Activated CD4-positive, alpha-beta memory T cell treated with anti-CD3 and anti-CD28 coated beads for 36 hours (primary cell): ENCODE measurements at regions of chr6 and their contacts with region 1.

Region 1: GRCh38 chr6:16761471-16762267 is 409 bp upstream of the ATXN1 start:
- DNase-seq: peak; percentile 92
- H3K4me3 Mint-ChIP-seq: peak overlapping the region; percentile 94
- H3K27ac Mint-ChIP-seq: peak overlapping the region; percentile 93
- H3K4me1 Mint-ChIP-seq: peaks cover 58% of the 10 kb centered on the region
- H3K27me3 Mint-ChIP-seq: no peaks in the 10 kb centered on the region

Region 2: DNA sequence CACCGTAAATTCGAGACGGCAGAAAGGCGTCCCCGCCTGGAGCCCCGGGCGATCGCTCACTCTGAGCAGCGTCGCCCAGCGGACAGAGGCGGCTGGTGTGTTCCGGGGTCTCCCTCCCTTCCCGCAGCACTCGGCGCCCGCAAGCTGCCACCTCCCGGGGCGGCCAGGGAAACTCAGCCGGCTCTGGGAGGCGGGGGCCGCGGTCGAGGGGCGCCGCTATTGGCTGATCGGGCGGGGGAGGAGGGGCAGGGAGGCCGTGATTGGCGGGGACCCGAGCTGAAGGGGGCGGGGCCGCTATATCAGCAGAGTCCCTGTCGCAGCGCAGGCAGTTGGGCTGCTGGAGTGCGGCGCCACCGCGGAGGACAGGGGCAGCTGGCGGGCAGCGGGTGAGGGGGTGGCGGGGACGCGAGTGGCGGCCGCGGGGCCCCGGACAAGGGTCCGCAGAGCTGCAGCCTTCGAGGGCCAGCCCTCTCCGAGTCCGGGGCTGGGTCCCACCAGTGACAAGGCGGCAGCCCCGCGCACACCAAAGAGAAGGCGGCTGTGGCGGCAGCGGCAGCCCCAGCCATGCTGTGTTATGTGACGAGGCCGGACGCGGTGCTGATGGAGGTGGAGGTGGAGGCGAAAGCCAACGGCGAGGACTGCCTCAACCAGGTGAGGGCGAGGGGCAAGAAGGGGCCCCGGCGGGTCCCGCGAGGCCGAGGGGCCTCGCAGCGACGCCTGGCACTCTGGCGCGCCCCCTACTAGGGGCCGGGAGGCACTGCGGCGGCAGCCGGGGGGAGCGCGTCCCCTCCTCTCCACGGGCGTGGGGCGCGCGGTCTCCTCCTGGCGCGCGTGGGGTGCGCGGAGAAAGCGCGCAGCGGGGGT is 632.7 kb before region 1 on chr6 and contains the start of gene MYLIP:
- CTCF ChIA-PET with region 1: no interaction called
- POLR2A ChIA-PET with region 1: no interaction called
- intact Hi-C with region 1: loop called (anchors 5 kb)
- DNase-seq: peak; percentile 98
- H3K4me3 Mint-ChIP-seq: peak within 1 kb of the TSS; percentile 93
- H3K27ac Mint-ChIP-seq: peak within 1 kb of the TSS; percentile 94
- H3K4me1 Mint-ChIP-seq: peaks cover 28% of the 10 kb centered on the region
- H3K27me3 Mint-ChIP-seq: no peaks in the 10 kb centered on the region
- total RNA-seq, gene MYLIP: 11.4 TPM

Region 3: GRCh38 chr6:16438718-16439591 is 322.7 kb before region 1 on chr6:
- CTCF ChIA-PET with region 1: interaction called, 14 read pairs
- POLR2A ChIA-PET with region 1: interaction called, 26 read pairs
- intact Hi-C with region 1: loop called (anchors 1 kb)
- DNase-seq: peak; percentile 62
- H3K4me3 Mint-ChIP-seq: peak overlapping the region; percentile 98
- H3K27ac Mint-ChIP-seq: peak overlapping the region; percentile 100
- H3K4me1 Mint-ChIP-seq: peaks cover 69% of the 10 kb centered on the region
- H3K27me3 Mint-ChIP-seq: no peaks in the 10 kb centered on the region

Region 4: GRCh38 chr6:16591396-16592222 is 170.1 kb before region 1 on chr6:
- CTCF ChIA-PET with region 1: interaction called, 3 read pairs
- POLR2A ChIA-PET with region 1: interaction called, 6 read pairs
- intact Hi-C with region 1: loop called (anchors 1 kb)
- DNase-seq: peak; percentile 72
- H3K4me3 Mint-ChIP-seq: peak overlapping the region; percentile 39
- H3K27ac Mint-ChIP-seq: peak overlapping the region; percentile 78
- H3K4me1 Mint-ChIP-seq: peaks cover 43% of the 10 kb centered on the region
- H3K27me3 Mint-ChIP-seq: no peaks in the 10 kb centered on the region

Region 5: DNA sequence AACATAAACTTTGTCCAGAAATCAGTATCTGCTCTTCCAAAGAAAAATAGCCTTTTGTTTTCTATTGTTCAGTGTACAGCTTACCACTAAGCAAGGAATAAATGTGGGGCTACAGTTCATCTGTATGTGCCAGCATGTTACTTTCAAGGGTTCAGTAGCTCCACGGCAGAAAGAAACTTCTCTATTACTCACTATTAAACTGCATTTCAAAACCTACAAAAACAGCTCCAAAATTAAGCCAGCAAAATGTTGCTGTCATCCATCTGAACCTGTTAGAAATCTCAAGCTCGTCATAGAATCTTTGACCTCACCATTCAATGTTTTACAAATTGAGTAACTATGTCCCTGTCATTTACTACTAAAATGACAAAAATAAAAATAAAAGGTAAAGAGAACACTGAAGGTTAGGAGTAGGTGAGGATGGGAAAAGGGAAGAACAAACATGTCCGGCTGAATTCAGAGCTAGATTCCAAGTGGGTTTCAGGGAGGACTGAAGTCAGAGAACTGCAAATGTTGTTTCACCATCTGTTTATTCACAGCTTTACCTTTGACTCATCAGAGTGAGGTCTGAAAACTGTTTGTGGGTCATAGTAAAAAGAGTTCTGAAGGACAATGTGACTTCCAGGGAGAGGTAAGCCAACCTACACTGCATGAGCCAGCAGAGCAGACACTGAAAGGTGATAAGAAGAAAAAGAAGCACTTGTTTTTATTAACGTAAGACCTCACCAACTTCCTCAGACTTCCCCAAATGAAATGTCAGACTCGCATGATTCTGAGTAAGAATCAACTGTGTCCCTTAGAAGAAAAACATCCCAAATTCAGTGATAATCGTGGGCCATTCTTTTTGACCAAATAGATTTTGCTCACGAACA is 62.4 kb before region 1 on chr6:
- CTCF ChIA-PET with region 1: interaction called, 33 read pairs
- POLR2A ChIA-PET with region 1: interaction called, 55 read pairs
- intact Hi-C with region 1: loop called (anchors 2 kb)
- DNase-seq: peak; percentile 53
- H3K4me3 Mint-ChIP-seq: peak overlapping the region; percentile 78
- H3K27ac Mint-ChIP-seq: peak overlapping the region; percentile 89
- H3K4me1 Mint-ChIP-seq: peaks cover 75% of the 10 kb centered on the region
- H3K27me3 Mint-ChIP-seq: no peaks in the 10 kb centered on the region

Region 6: DNA sequence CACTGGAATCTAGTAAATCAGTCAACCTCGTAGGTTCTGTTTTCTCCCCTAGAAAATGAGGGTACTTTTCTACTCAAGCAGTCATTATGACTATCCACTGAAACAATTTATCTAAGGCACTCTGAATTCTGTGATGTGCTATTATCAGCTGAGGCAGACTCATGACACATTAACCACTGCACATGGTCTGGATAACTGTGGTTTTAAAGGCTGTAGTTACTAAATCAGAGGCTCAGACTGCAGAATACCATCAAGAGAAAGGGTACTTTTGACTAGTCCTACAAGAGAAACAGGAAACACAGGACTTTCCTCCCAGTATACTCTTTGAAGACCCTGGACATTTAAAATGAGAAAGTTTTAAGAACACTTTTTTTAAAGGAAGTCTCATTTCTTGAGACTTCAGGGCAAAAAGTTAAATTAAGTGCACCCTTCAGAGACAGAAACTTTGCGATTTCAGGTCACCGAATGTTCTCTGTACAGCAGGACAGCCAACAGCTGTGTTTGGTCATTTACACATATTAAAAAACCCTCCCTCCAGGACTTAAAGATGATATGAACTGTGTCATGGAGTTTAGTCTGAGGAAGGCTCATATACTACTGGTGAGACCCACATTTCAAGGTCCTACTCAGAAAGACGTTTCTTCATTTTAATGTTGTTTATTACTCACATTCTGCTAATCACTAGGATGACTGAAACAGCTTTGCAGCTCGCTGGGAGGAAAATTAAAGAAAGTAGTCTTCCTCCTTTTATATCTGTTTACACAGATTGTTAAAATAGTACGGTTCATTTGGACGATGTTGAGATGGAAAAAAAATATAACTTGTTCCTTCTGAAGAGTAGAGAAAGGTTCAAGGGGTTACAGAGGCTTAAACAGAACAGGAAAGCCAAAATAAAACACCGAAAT is 20.3 kb before region 1 on chr6:
- CTCF ChIA-PET with region 1: interaction called, 10 read pairs
- POLR2A ChIA-PET with region 1: interaction called, 9 read pairs
- intact Hi-C with region 1: loop called (anchors 1 kb)
- DNase-seq: no peak
- H3K4me3 Mint-ChIP-seq: no peak overlapping the region
- H3K27ac Mint-ChIP-seq: peak overlapping the region; percentile 25
- H3K4me1 Mint-ChIP-seq: peaks cover 77% of the 10 kb centered on the region
- H3K27me3 Mint-ChIP-seq: no peaks in the 10 kb centered on the region

Region 7: GRCh38 chr6:16793828-16794412 is 32.3 kb after region 1 on chr6:
- CTCF ChIA-PET with region 1: no interaction called
- POLR2A ChIA-PET with region 1: no interaction called
- intact Hi-C with region 1: no loop called
- DNase-seq: no peak
- H3K4me3 Mint-ChIP-seq: no peak overlapping the region
- H3K27ac Mint-ChIP-seq: no peak overlapping the region
- H3K4me1 Mint-ChIP-seq: no peaks in the 10 kb centered on the region
- H3K27me3 Mint-ChIP-seq: no peaks in the 10 kb centered on the region

Region 8: DNA sequence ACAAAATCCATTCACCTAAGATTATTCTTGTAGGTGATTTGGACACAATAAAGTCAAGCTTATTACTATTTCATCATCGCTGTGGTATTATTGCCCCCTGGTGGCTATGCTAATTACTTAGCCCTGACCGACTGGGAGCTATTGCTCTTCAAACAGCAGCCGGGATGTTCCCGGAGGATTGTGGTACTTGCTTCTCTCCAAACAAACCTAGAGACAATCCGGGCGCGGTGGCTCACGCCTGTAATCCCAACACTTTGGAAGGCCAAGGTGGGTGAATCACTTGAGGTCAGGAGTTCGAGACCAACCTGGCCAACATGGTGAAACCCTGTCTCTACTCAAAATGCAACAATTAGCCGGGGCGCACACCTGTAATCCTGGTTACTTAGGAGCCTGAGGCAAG is 324.8 kb after region 1 on chr6:
- CTCF ChIA-PET with region 1: interaction called, 18 read pairs
- POLR2A ChIA-PET with region 1: no interaction called
- intact Hi-C with region 1: loop called (anchors 1 kb)
- DNase-seq: peak; percentile 19
- H3K4me3 Mint-ChIP-seq: no peak overlapping the region
- H3K27ac Mint-ChIP-seq: no peak overlapping the region
- H3K4me1 Mint-ChIP-seq: no peaks in the 10 kb centered on the region
- H3K27me3 Mint-ChIP-seq: peaks cover 7% of the 10 kb centered on the region